Thyroid gland (tissue), 4 donors: ENCODE measurements at regions of chr14 and their contacts with region 1.

Region 1: DNA sequence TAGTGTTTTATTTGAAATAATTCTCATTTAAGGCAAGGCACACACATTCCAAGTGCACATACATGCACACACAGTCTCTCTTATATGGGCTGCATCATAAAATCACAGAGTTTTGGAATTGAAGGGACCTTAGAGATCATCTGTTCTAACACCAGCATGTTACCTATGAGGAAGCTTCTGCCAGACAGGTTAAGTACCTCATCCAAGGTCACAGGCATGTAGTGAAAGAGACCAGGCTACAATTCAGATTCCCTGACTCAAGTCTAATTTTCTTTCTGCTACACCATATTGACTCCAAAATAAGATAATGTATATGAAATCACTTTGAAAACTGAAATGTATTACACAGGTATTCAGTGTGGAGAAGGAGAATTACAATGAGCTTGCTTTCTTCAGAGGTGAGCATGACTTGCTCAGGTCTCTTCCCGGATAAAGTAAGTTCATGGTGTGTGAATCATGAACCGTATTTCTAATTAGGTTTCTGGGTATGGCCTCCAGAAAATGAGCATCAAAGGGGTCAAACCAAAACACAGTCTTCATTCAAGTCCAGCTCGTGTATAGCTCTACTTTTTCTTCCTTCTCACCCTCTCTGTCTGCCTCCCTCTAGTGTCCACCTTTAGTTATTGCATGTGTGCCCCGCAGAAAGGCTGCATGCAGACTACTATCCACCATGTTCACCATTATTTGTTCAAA is 411.9 kb downstream of the FUT8 start:
- DNase-seq: peak; percentile 37 to 54
- H3K4me3 ChIP-seq: no peak overlapping the region
- H3K27ac ChIP-seq: no peak overlapping the region
- H3K4me1 ChIP-seq: no peaks in the 10 kb centered on the region
- H3K27me3 ChIP-seq: no peaks in the 10 kb centered on the region
- CTCF ChIP-seq: peak; percentile 68 to 93 (median 86)
- POLR2A ChIP-seq: no peak

Region 2: GRCh38 chr14:65169351-65169750 is 655.1 kb before region 1 on chr14:
- intact Hi-C with region 1: loop called (anchors 5 kb)
- DNase-seq: no peak
- H3K4me3 ChIP-seq: no peak overlapping the region
- H3K27ac ChIP-seq: no peak overlapping the region
- H3K4me1 ChIP-seq: peaks cover 0 to 5% of the 10 kb centered on the region in 2 donors
- H3K27me3 ChIP-seq: no peaks in the 10 kb centered on the region
- CTCF ChIP-seq: no peak
- POLR2A ChIP-seq: no peak

Region 3: DNA sequence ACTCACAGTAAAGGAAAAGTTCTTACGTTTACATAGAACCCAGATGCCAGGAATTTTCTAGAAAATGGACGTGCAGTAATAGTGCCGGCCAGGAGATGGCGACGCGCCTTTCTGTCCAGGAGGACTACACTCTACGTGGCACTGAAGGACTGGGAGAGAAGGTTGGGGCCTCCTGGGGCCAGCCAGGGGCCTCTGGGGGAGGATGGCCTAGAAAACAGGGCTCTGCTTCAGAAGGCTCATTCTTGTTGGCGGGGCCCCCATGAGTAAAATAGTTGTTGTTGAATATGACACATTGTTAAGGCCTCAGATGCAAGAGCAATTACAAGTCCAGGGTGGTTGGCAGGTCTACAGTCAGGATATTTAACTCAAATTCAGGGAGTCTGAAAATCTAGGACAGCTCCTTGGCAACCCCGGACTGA is 602.0 kb before region 1 on chr14:
- intact Hi-C with region 1: loop called (anchors 10 kb)
- DNase-seq: peak; percentile 41 to 46
- H3K4me3 ChIP-seq: no peak overlapping the region
- H3K27ac ChIP-seq: no peak overlapping the region
- H3K4me1 ChIP-seq: no peaks in the 10 kb centered on the region
- H3K27me3 ChIP-seq: no peaks in the 10 kb centered on the region
- CTCF ChIP-seq: peak; percentile 35 to 80 (median 62)
- POLR2A ChIP-seq: no peak

Region 4: DNA sequence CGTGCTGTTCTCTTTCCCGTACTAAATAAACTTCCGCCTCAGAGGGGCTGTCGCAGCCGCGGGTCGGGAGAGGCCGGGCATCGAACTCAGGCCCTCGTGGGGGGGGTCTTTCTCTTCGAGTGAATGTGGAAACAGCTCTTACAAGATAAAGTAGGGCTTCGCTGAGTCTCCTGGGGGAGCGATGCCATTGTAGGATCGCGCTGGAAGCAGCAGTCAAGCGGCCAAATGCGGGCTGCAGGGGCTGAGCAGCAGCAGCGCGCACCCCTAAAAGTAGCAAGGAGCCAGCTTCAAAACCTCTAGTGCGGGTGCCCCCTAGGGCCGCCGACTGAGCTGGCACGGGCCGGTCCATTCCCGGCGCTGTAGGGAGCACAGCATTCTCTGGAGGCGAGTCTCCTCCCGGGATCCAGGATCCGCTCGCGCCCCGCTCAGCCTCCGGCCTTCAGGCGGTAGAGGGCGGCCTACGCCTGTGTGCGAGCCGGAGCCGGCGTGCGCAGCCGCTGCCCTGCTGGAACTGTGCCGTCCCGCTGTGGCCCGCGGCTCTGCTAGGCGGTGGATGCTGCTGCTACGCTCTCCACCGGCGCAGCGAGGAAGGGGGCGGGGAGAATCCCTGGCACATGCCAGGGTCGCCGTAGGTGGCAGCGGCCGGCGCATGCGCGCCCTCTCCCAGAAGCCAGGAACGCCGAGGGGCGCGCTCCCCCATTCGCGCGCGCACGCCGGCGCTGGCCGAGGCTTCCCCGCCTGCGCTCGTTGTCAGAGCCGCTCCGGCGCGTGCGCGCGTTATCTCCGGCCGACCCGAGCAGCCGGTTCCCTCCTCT is 412.2 kb before region 1 on chr14 and contains the start of gene FUT8:
- intact Hi-C with region 1: loop called (anchors 5 kb)
- DNase-seq: peak; percentile 98
- H3K4me3 ChIP-seq: peak within 1 kb of the TSS; percentile 89 to 95 (median 89)
- H3K27ac ChIP-seq: peak within 1 kb of the TSS; percentile 73 to 97 (median 92)
- H3K4me1 ChIP-seq: peaks cover 4 to 13% of the 10 kb centered on the region in 2 donors
- H3K27me3 ChIP-seq: no peaks in the 10 kb centered on the region
- CTCF ChIP-seq: peak; percentile 18 to 87 (median 62)
- POLR2A ChIP-seq: peak in 1 of 2 donors; percentile 92
- total RNA-seq, gene FUT8: 29.2 to 55.5 (median 41.1) TPM